A673 (cell line): ENCODE measurements at regions of chrX and their contacts with region 1.

Region 1: GRCh38 chrX:50747471-50747900 is 66.5 kb downstream of the SHROOM4 start:
- DNase-seq: peak; percentile 66
- H3K4me3 ChIP-seq: no peak overlapping the region
- H3K27ac ChIP-seq: no peak overlapping the region
- H3K4me1 ChIP-seq: peaks cover 3% of the 10 kb centered on the region
- H3K27me3 ChIP-seq: no peaks in the 10 kb centered on the region
- CTCF ChIP-seq: peak; percentile 84

Region 2: DNA sequence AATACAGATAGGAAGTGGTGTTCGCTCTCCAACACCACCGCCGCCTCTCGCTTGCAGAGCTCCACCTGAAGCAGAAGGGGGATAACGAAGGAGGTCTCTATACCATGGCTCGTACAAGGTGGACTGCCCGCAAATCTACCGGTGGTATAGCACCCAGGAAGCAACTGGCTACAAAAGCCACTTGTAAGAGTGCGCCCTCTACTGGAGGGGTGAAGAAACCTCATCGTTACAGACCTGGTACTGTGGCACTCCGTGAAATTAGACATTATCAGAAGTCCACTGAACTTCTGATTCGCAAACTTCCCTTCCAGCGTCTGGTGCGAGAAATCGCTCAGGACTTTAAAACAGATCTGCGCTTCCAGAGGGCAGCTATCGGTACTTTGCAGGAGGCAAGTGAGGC is 157.8 kb after region 1 on chrX:
- CTCF ChIA-PET with region 1: interaction called, 6 read pairs
- POLR2A ChIA-PET with region 1: interaction called, 3 read pairs
- intact Hi-C with region 1: loop called (anchors 1 kb)
- DNase-seq: peak; percentile 11
- H3K4me3 ChIP-seq: no peak overlapping the region
- H3K27ac ChIP-seq: no peak overlapping the region
- H3K4me1 ChIP-seq: no peaks in the 10 kb centered on the region
- H3K27me3 ChIP-seq: no peaks in the 10 kb centered on the region
- CTCF ChIP-seq: peak; percentile 60

Region 3: GRCh38 chrX:50988649-50989048 is 241.2 kb after region 1 on chrX:
- CTCF ChIA-PET with region 1: interaction called, 6 read pairs
- POLR2A ChIA-PET with region 1: no interaction called
- intact Hi-C with region 1: loop called (anchors 2 kb)
- DNase-seq: peak; percentile 67
- H3K4me3 ChIP-seq: no peak overlapping the region
- H3K27ac ChIP-seq: no peak overlapping the region
- H3K4me1 ChIP-seq: no peaks in the 10 kb centered on the region
- H3K27me3 ChIP-seq: no peaks in the 10 kb centered on the region
- CTCF ChIP-seq: peak; percentile 75

Region 4: GRCh38 chrX:51047836-51048349 is 300.4 kb after region 1 on chrX:
- CTCF ChIA-PET with region 1: no interaction called
- POLR2A ChIA-PET with region 1: no interaction called
- intact Hi-C with region 1: no loop called
- DNase-seq: no peak
- H3K4me3 ChIP-seq: no peak overlapping the region
- H3K27ac ChIP-seq: no peak overlapping the region
- H3K4me1 ChIP-seq: no peaks in the 10 kb centered on the region
- H3K27me3 ChIP-seq: peaks cover 3% of the 10 kb centered on the region
- CTCF ChIP-seq: no peak